Activated CD8-positive, alpha-beta T cell treated with anti-CD3 and anti-CD28 coated beads for 36 hours (primary cell): ENCODE measurements at regions of chr17 and their contacts with region 1.

Region 1: GRCh38 chr17:27455914-27456680 is at the start of gene KSR1:
- DNase-seq: peak; percentile 88
- ATAC-seq: peak; percentile 93
- H3K4me3 Mint-ChIP-seq: peak within 1 kb of the TSS; percentile 94
- H3K27ac Mint-ChIP-seq: peak within 1 kb of the TSS; percentile 85
- H3K4me1 Mint-ChIP-seq: peaks cover 38% of the 10 kb centered on the region
- H3K27me3 Mint-ChIP-seq: peaks cover 3% of the 10 kb centered on the region
- CTCF ChIP-seq: peak; percentile 24
- total RNA-seq, gene KSR1: 53.9 to 58.2 TPM

Region 2: GRCh38 chr17:27353461-27354050 is 102.5 kb before region 1 on chr17:
- CTCF ChIA-PET with region 1: interaction called, 7 read pairs
- POLR2A ChIA-PET with region 1: no interaction called
- intact Hi-C with region 1: loop called (anchors 10 kb)
- DNase-seq: peak; percentile 90
- ATAC-seq: peak; percentile 88
- H3K4me3 Mint-ChIP-seq: peak overlapping the region; percentile 78
- H3K27ac Mint-ChIP-seq: peak overlapping the region; percentile 96
- H3K4me1 Mint-ChIP-seq: peaks cover 25% of the 10 kb centered on the region
- H3K27me3 Mint-ChIP-seq: no peaks in the 10 kb centered on the region
- CTCF ChIP-seq: peak; percentile 90

Region 3: DNA sequence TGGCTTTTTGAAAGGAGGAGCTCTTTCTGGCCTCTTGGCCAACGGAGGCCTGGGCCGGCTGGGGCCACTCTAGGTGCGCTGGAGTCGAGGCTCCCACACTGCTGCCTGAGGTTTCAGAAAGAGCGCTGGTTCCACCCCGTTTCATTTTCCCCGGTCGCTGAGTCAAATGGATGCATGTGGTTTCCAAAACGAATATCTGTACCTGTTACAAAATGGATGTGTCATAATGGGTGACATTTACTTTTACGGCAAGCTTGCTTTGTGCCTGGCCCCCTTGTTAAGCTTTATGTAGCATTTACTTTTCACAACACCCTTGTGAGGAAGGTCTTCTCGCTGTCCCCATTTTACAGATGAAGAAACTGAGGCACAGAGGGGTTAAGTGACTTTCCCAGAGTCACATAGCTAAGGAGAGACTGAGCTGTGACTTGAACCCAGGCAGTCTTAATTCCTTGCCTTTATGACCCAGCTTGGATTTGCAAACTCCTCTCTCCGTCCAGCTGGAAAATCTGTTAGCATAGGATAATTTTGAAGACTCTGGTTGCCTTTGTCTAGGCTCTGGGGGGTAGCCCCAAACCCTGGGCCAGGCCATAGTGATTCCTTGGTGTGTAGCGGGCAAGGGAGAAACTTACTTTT is 10.8 kb after region 1 on chr17:
- CTCF ChIA-PET with region 1: interaction called, 40 read pairs
- POLR2A ChIA-PET with region 1: interaction called, 83 read pairs
- intact Hi-C with region 1: no loop called
- DNase-seq: peak; percentile 92
- ATAC-seq: peak; percentile 84
- H3K4me3 Mint-ChIP-seq: peak overlapping the region; percentile 67
- H3K27ac Mint-ChIP-seq: peak overlapping the region; percentile 96
- H3K4me1 Mint-ChIP-seq: peaks cover 85% of the 10 kb centered on the region
- H3K27me3 Mint-ChIP-seq: no peaks in the 10 kb centered on the region
- CTCF ChIP-seq: no peak

Region 4: GRCh38 chr17:27506348-27507231 is 50.5 kb after region 1 on chr17:
- CTCF ChIA-PET with region 1: no interaction called
- POLR2A ChIA-PET with region 1: no interaction called
- intact Hi-C with region 1: no loop called
- DNase-seq: no peak
- ATAC-seq: peak; percentile 58
- H3K4me3 Mint-ChIP-seq: no peak overlapping the region
- H3K27ac Mint-ChIP-seq: peak overlapping the region; percentile 30
- H3K4me1 Mint-ChIP-seq: peaks cover 16% of the 10 kb centered on the region
- H3K27me3 Mint-ChIP-seq: no peaks in the 10 kb centered on the region
- CTCF ChIP-seq: no peak

Region 5: DNA sequence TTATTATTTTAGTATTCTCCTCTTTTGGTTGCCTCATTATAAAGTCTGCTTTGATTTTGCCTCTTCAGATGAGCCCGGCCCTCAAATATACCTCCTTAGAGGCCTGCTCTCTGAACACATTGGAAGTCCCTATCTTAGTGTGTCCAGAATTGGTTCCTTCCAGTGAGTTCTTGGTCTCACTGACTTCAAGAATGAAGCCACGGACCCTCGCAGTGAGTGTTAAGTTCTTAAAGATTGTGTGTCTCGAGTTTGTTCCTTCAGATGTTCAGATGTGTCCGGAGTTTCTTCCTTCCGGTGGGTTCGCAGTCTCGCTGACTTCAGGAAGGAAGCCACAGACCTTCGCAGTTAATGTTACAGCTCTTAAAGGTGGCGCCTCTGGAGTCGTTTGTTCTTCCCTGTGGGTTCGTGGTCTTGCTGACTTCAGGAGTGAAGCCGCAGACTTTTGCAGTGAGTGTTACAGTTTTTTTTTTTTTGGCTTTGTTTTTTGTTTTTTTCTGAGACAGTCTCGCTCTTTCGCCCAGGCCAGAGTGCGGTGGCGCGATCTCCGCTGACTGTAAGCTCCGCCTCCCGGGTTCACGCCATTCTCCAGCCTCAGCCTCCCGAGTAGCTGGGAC is 390.1 kb after region 1 on chr17:
- CTCF ChIA-PET with region 1: no interaction called
- POLR2A ChIA-PET with region 1: no interaction called
- intact Hi-C with region 1: no loop called
- DNase-seq: peak; percentile 48
- ATAC-seq: peak; percentile 79
- H3K4me3 Mint-ChIP-seq: peak overlapping the region; percentile 63
- H3K27ac Mint-ChIP-seq: peak overlapping the region; percentile 84
- H3K4me1 Mint-ChIP-seq: peaks cover 20% of the 10 kb centered on the region
- H3K27me3 Mint-ChIP-seq: no peaks in the 10 kb centered on the region
- CTCF ChIP-seq: no peak